ENCODE measurements at regions of chr11 and their contacts with region 1.

Region 1: DNA sequence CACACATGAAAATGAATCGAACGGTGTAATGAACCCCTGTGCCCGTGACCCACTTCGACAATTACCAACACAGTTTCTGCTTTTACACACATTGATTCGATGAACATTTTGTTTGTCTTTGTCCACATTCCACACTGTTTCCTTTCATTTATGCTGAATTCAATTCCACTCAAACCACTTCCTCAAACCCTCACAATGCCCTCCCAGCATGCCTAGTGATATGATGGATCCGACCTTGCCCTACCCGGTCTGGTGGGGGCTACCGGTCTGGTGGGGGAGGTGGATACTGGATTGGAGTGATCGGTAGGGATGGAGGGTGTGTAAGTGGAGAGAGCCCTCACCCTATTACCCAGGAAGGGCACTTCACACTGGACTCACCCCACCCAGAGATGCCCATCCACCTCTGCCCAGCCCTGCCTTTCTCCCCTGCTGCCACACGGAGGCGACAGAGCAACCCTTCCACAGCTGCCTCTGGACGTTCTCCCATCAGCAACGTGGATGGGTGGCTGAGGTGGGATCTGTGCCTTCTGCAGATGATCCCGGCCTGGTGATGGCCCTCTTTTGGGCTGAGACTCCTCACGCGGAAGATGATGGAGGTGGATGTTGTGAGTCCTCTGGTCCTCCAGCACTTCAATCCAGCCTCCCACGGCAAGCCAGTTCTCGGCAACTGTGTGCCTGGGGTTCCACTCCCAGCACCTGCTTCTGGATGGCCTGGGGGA is 33.0 kb upstream of the P2RY2 start:
- DNase-seq: peak; percentile 57 to 84 (median 80)
- H3K4me3 ChIP-seq: peak overlapping the region in 6 of 7 experiments; percentile 2 to 76 (median 50)
- H3K27ac ChIP-seq: no peak overlapping the region
- H3K4me1 ChIP-seq: peaks cover 0 to 59% (median 45%) of the 10 kb centered on the region in 4 experiments
- H3K27me3 ChIP-seq: no peaks in the 10 kb centered on the region

Region 2: GRCh38 chr11:72831513-72832300 is 353.4 kb before region 1 on chr11:
- CTCF ChIA-PET with region 1: interaction called, 75 read pairs
- POLR2A ChIA-PET with region 1: no interaction called
- DNase-seq: peak; percentile 62 to 81 (median 79)
- H3K4me3 ChIP-seq: no peak overlapping the region
- H3K27ac ChIP-seq: no peak overlapping the region
- H3K4me1 ChIP-seq: peaks cover 0 to 11% (median 4%) of the 10 kb centered on the region in 4 experiments
- H3K27me3 ChIP-seq: no peaks in the 10 kb centered on the region

Region 3: GRCh38 chr11:73204711-73205121 is 19.6 kb after region 1 on chr11:
- CTCF ChIA-PET with region 1: interaction called, 15 read pairs
- POLR2A ChIA-PET with region 1: no interaction called
- DNase-seq: peak in 2 of 3 donors; percentile 79 to 81
- H3K4me3 ChIP-seq: peak overlapping the region in 3 of 7 experiments; percentile 30 to 42 (median 34)
- H3K27ac ChIP-seq: no peak overlapping the region
- H3K4me1 ChIP-seq: peaks cover 8 to 61% (median 27%) of the 10 kb centered on the region in 4 experiments
- H3K27me3 ChIP-seq: no peaks in the 10 kb centered on the region

Region 4: GRCh38 chr11:73218106-73218829 is 33.2 kb after region 1 on chr11 and contains the start of gene P2RY2:
- CTCF ChIA-PET with region 1: interaction called, 11 read pairs
- POLR2A ChIA-PET with region 1: no interaction called
- DNase-seq: peak; percentile 56 to 75 (median 69)
- H3K4me3 ChIP-seq: peak within 1 kb of the TSS; percentile 21 to 78 (median 64)
- H3K27ac ChIP-seq: no peak within 1 kb of the TSS
- H3K4me1 ChIP-seq: peaks cover 0 to 44% (median 14%) of the 10 kb centered on the region in 4 experiments
- H3K27me3 ChIP-seq: peaks cover 0 to 17% (median 5%) of the 10 kb centered on the region in 5 experiments

Region 5: GRCh38 chr11:73242251-73243079 is 57.4 kb after region 1 on chr11:
- CTCF ChIA-PET with region 1: interaction called, 272 read pairs
- POLR2A ChIA-PET with region 1: interaction called, 5 read pairs
- DNase-seq: peak; percentile 66 to 80 (median 78)
- H3K4me3 ChIP-seq: peak overlapping the region in 4 of 7 experiments; percentile 16 to 70 (median 54)
- H3K27ac ChIP-seq: no peak overlapping the region
- H3K4me1 ChIP-seq: peaks cover 0 to 11% (median 9%) of the 10 kb centered on the region in 4 experiments
- H3K27me3 ChIP-seq: no peaks in the 10 kb centered on the region

Region 6: GRCh38 chr11:73307323-73308002 is 122.4 kb after region 1 on chr11:
- CTCF ChIA-PET with region 1: interaction called, 15 read pairs
- POLR2A ChIA-PET with region 1: no interaction called
- DNase-seq: peak; percentile 96 to 98 (median 97)
- H3K4me3 ChIP-seq: peak overlapping the region; percentile 57 to 91 (median 81)
- H3K27ac ChIP-seq: peak overlapping the region; percentile 40 to 50
- H3K4me1 ChIP-seq: peaks cover 3 to 50% (median 49%) of the 10 kb centered on the region in 4 experiments
- H3K27me3 ChIP-seq: no peaks in the 10 kb centered on the region